ENCODE measurements at regions of chr15 and their contacts with region 1.

Region 1: DNA sequence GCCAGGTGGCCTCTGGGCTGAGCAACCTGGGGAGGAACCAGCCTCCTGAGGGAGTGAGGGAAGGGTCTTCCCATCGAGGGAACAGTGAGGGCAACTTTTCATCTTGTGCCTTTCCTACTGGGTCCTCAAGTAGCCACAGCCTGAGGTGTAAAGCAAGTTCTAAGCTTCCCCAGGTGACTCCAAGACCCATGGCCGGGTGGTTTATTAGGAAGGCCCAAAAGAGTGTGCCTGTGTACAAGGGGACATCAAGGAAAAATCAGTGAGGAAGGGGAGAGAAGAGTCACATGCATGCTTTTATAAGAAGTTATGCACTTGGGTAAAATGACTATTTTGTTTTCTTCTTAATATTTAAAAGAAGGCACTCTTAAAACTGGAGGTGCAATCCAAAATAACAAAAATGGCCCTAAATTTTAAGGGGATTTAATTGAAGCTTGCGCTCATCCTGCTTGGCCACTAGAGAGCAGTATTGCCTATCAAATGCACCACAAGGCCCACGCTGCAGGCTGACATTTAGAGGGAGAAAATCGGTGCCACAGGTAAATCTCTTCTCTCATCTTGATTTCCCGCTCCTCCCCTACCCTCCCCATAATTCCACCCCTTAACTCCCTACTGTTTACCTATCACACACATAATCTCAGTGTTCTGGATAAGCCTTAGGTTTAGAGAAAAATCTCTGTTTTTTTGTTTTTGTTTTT is 6.7 kb downstream of the NANOGP8 start:
- DNase-seq: no peak
- ATAC-seq: peak; percentile 75
- H3K4me3 ChIP-seq: no peak overlapping the region
- H3K27ac ChIP-seq: no peak overlapping the region
- H3K4me1 ChIP-seq: no peaks in the 10 kb centered on the region
- H3K27me3 ChIP-seq: no peaks in the 10 kb centered on the region
- CTCF ChIP-seq: peak; percentile 78 to 89 (median 82)
- EP300 ChIP-seq: no peak
- POLR2A ChIP-seq: no peak
- RAD21 ChIP-seq: peak; percentile 98

Region 2: DNA sequence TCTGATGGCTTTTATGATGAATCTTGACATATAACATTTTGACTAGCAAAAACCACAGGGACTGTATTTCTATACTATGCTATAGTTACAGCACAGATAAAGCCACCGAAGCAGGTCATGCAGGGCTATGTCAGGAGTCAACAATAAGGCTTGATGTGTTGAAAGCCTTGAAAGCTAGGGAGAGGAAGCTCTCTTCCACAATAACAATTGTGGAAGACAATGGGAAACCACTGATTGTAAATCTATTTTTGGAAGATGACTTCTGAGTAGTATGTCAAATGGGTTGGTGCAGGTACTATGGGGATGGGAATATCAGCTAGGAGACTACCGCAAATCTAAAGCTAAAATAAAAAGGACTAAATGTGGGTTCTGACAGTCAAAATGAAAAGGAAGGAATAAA is 104.9 kb before region 1 on chr15:
- CTCF ChIA-PET with region 1: no interaction called
- POLR2A ChIA-PET with region 1: no interaction called
- RAD21 ChIA-PET with region 1: no interaction called
- SMC1A ChIA-PET with region 1: no interaction called
- in situ Hi-C with region 1: no loop called
- intact Hi-C with region 1: no loop called
- DNase-seq: no peak
- ATAC-seq: no peak
- H3K4me3 ChIP-seq: no peak overlapping the region
- H3K27ac ChIP-seq: no peak overlapping the region
- H3K4me1 ChIP-seq: peaks cover 2% of the 10 kb centered on the region; the same call in 1 of the 2 replicates
- H3K27me3 ChIP-seq: no peaks in the 10 kb centered on the region
- CTCF ChIP-seq: no peak
- EP300 ChIP-seq: no peak
- POLR2A ChIP-seq: no peak
- RAD21 ChIP-seq: no peak

Region 3: DNA sequence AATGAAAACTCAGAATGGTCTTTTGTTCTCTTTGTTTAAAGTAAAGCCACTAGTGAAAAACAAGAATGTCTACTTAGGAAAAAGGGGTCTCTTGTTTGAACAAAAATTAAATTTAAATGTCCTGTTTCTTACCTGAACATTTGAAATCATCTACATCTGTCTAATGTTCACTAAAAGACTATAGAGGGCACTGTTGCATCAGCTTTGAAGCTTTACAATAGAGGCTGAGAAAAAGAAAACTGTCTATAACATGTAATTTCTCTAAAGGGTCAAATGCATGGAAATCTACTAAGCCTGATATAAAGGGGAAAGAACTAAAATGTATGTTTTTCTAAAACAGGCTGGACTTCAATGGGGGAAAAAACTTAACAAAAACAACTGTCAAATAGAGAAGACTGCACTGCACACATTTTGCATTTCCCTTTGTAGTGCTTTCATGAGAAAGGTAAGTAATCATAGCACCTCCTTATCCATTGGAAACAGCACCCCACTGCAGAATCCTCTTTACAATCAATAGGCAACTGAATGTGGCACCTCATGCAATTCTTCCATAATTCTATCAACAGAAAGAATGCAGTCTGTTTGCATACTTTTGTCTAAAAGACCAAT is 441.3 kb after region 1 on chr15:
- CTCF ChIA-PET with region 1: no interaction called
- POLR2A ChIA-PET with region 1: no interaction called
- RAD21 ChIA-PET with region 1: interaction called, 3 read pairs
- SMC1A ChIA-PET with region 1: no interaction called
- in situ Hi-C with region 1: no loop called
- intact Hi-C with region 1: loop called (anchors 5 kb)
- DNase-seq: peak; percentile 19
- ATAC-seq: peak; percentile 79
- H3K4me3 ChIP-seq: no peak overlapping the region
- H3K27ac ChIP-seq: no peak overlapping the region
- H3K4me1 ChIP-seq: no peaks in the 10 kb centered on the region
- H3K27me3 ChIP-seq: no peaks in the 10 kb centered on the region
- CTCF ChIP-seq: peak; percentile 41 to 71 (median 62); a peak in 5 of 6 replicates
- EP300 ChIP-seq: no peak
- POLR2A ChIP-seq: no peak
- RAD21 ChIP-seq: peak; percentile 88

Measured in GM12878 (cell line).